Calu3 (cell line): ENCODE measurements at regions of chr22 and their contacts with region 1.

Region 1: GRCh38 chr22:46563381-46564083 is 26.1 kb upstream of the CELSR1 start:
- DNase-seq: peak; percentile 86
- H3K4me3 Mint-ChIP-seq: peak overlapping the region; percentile 55
- H3K27ac Mint-ChIP-seq: peak overlapping the region; percentile 46
- H3K4me1 Mint-ChIP-seq: peaks cover 14% of the 10 kb centered on the region
- H3K27me3 Mint-ChIP-seq: peaks cover 5% of the 10 kb centered on the region
- CTCF ChIP-seq: peak; percentile 89

Region 2: GRCh38 chr22:46547883-46548244 is 15.7 kb before region 1 on chr22:
- CTCF ChIA-PET with region 1: interaction called, 10 read pairs
- intact Hi-C with region 1: no loop called
- DNase-seq: peak; percentile 63
- H3K4me3 Mint-ChIP-seq: peak overlapping the region; percentile 29
- H3K27ac Mint-ChIP-seq: peak overlapping the region; percentile 68
- H3K4me1 Mint-ChIP-seq: peaks cover 33% of the 10 kb centered on the region
- H3K27me3 Mint-ChIP-seq: no peaks in the 10 kb centered on the region
- CTCF ChIP-seq: no peak

Region 3: GRCh38 chr22:46574966-46575910 is 11.7 kb after region 1 on chr22:
- CTCF ChIA-PET with region 1: interaction called, 20 read pairs
- intact Hi-C with region 1: no loop called
- DNase-seq: peak; percentile 78
- H3K4me3 Mint-ChIP-seq: peak overlapping the region; percentile 42
- H3K27ac Mint-ChIP-seq: peak overlapping the region; percentile 82
- H3K4me1 Mint-ChIP-seq: peaks cover 44% of the 10 kb centered on the region
- H3K27me3 Mint-ChIP-seq: no peaks in the 10 kb centered on the region
- CTCF ChIP-seq: no peak

Region 4: DNA sequence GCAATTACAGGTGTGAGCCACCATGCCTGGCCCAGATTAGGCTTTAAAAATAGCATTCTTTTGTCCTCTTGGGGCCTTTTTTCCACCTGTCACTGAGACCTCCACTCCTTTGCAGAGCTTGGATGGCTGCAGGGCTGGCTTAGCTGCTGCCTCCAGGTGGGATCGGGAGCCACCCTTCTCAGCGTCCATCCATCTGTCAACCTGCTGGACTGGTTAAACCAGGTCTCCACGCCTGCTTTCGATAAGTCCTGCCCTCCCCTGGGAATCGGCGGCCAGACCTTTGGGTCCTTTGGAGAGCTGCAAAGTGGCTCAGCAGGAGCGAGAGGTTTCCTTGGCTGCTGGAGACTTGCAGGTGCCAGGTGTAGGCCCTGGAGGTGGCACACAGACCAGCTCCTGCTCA is 33.3 kb after region 1 on chr22:
- CTCF ChIA-PET with region 1: interaction called, 10 read pairs
- intact Hi-C with region 1: no loop called
- DNase-seq: peak; percentile 93
- H3K4me3 Mint-ChIP-seq: peak overlapping the region; percentile 54
- H3K27ac Mint-ChIP-seq: peak overlapping the region; percentile 92
- H3K4me1 Mint-ChIP-seq: peaks cover 18% of the 10 kb centered on the region
- H3K27me3 Mint-ChIP-seq: no peaks in the 10 kb centered on the region
- CTCF ChIP-seq: peak; percentile 89

Region 5: GRCh38 chr22:46604306-46604690 is 40.8 kb after region 1 on chr22:
- CTCF ChIA-PET with region 1: interaction called, 7 read pairs
- intact Hi-C with region 1: loop called (anchors 1 kb)
- DNase-seq: no peak
- H3K4me3 Mint-ChIP-seq: no peak overlapping the region
- H3K27ac Mint-ChIP-seq: no peak overlapping the region
- H3K4me1 Mint-ChIP-seq: peaks cover 11% of the 10 kb centered on the region
- H3K27me3 Mint-ChIP-seq: no peaks in the 10 kb centered on the region
- CTCF ChIP-seq: no peak

Region 6: GRCh38 chr22:46661221-46661851 is 97.8 kb after region 1 on chr22:
- CTCF ChIA-PET with region 1: interaction called, 8 read pairs
- intact Hi-C with region 1: loop called (anchors 10 kb)
- DNase-seq: peak; percentile 54
- H3K4me3 Mint-ChIP-seq: no peak overlapping the region
- H3K27ac Mint-ChIP-seq: peak overlapping the region; percentile 30
- H3K4me1 Mint-ChIP-seq: peaks cover 22% of the 10 kb centered on the region
- H3K27me3 Mint-ChIP-seq: no peaks in the 10 kb centered on the region
- CTCF ChIP-seq: no peak

Region 7: GRCh38 chr22:46758867-46759290 is 195.3 kb after region 1 on chr22:
- CTCF ChIA-PET with region 1: interaction called, 11 read pairs
- intact Hi-C with region 1: no loop called
- DNase-seq: peak; percentile 65
- H3K4me3 Mint-ChIP-seq: no peak overlapping the region
- H3K27ac Mint-ChIP-seq: peak overlapping the region; percentile 2
- H3K4me1 Mint-ChIP-seq: peaks cover 44% of the 10 kb centered on the region
- H3K27me3 Mint-ChIP-seq: no peaks in the 10 kb centered on the region
- CTCF ChIP-seq: peak; percentile 77